ENCODE measurements at regions of chr19 and their contacts with region 1.

Region 1: GRCh38 chr19:1551068-1552040 is 16.8 kb downstream of the MEX3D start:
- DNase-seq: no peak
- H3K4me3 ChIP-seq: no peak overlapping the region
- H3K27ac ChIP-seq: no peak overlapping the region
- H3K4me1 ChIP-seq: peaks cover 0 to 1% (median 0%) of the 10 kb centered on the region in 4 donors
- H3K27me3 ChIP-seq: peaks cover 0 to 16% of the 10 kb centered on the region in 2 donors
- CTCF ChIP-seq: no peak

Region 2: DNA sequence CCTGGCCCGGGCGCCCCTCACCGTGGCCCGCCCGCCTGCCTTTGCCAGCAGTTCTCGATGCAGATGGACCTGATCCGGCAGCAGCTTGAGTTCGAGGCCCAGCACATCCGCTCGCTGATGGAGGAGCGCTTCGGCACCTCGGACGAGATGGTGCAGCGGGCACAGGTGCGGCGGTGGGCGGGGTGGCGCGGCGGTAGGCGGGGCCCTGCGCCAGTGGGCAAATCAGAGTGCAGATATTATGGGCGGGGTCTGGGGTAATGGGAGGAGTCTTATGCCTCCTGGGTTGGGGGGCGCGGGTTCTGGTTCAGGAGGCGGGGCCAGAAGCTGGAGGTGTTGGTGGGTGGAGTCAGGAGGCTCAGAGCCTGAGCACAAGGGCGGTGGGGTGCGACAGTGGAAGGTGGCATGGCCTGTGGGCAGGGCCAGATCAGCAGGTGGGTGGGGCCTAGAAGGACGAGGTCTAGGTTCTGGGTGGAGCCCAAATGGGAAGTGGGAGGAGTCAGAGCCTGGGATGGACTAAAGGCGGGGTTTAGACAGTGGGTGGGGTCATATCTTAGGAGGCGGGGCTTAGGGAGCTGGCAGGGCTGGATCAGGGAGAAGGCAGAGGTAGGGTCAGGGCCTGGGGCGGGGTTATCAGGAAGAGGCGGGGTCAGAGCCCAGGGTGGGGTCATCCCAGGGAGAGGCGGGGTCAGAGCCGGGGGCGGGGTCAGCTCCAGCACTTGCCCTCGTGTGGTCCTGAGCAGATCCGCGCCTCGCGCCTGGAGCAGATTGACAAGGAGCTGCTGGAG is 95.8 kb before region 1 on chr19:
- intact Hi-C with region 1: no loop called
- DNase-seq: no peak
- H3K4me3 ChIP-seq: no peak overlapping the region
- H3K27ac ChIP-seq: no peak overlapping the region
- H3K4me1 ChIP-seq: peaks cover 0 to 54% (median 26%) of the 10 kb centered on the region in 4 donors
- H3K27me3 ChIP-seq: peaks cover 9 to 83% of the 10 kb centered on the region in 2 donors
- CTCF ChIP-seq: no peak

Region 3: GRCh38 chr19:1577090-1577928 is 26.0 kb after region 1 on chr19:
- intact Hi-C with region 1: no loop called
- DNase-seq: no peak
- H3K4me3 ChIP-seq: no peak overlapping the region
- H3K27ac ChIP-seq: no peak overlapping the region
- H3K4me1 ChIP-seq: no peaks in the 10 kb centered on the region
- H3K27me3 ChIP-seq: no peaks in the 10 kb centered on the region
- CTCF ChIP-seq: no peak

Region 4: GRCh38 chr19:1767464-1767933 is 216.1 kb after region 1 on chr19:
- intact Hi-C with region 1: loop called (anchors 5 kb)
- DNase-seq: no peak
- H3K4me3 ChIP-seq: no peak overlapping the region
- H3K27ac ChIP-seq: no peak overlapping the region
- H3K4me1 ChIP-seq: no peaks in the 10 kb centered on the region
- H3K27me3 ChIP-seq: peaks cover 0 to 96% of the 10 kb centered on the region in 2 donors
- CTCF ChIP-seq: peak; percentile 85 to 96